ENCODE measurements at regions of chr3 and their contacts with region 1.

Region 1: DNA sequence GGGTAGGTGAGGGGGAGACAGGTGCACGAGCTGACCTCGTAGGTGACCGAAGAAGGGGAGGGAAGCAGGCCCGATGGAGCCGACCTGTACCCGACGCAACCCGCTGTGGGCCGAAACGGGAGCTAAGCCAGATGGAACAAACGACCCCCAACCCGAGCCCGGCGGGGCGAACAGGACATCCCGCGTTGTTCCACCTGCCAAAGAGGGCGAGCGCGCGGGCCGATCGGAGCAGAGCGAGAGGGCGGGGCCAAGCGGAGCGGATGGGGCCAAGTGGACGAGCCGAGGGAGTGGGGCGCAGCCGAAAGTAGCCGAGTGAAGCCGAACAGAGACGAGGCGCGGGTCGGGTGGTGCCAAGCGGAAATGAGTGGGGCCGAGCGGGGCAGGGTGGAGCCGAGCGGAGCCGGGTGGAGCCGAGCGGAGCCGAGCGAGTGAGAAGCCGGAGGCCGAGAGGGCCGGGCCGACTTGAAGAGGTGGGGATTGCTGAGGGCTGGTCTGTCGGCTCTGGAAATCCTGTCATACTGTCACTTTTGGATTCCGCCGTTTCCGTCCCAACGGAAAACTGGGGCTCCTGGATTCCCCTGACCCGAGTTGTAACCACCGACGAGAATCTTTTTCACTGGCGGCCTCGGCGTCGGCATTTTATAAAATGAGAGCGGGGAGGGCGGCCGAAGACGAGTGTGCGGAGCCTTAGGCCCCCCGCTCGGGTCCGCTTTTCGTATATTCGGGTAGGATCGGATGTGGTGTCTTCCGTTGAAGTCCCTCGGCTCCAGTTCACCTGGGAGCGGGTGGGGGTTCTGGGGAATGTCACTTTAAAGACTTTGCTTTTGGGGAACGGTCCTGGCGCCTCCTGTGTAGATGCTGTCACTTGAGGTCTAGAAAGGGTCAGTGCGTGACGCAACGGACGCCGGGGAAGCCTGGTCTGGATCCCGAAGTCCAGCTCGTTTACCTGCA is 15.6 kb upstream of the WNT7A start:
- DNase-seq: peak; percentile 98
- H3K4me3 Mint-ChIP-seq: peak overlapping the region; percentile 84
- H3K27ac Mint-ChIP-seq: peak overlapping the region; percentile 67
- H3K4me1 Mint-ChIP-seq: peaks cover 28% of the 10 kb centered on the region
- H3K27me3 Mint-ChIP-seq: no peaks in the 10 kb centered on the region

Region 2: DNA sequence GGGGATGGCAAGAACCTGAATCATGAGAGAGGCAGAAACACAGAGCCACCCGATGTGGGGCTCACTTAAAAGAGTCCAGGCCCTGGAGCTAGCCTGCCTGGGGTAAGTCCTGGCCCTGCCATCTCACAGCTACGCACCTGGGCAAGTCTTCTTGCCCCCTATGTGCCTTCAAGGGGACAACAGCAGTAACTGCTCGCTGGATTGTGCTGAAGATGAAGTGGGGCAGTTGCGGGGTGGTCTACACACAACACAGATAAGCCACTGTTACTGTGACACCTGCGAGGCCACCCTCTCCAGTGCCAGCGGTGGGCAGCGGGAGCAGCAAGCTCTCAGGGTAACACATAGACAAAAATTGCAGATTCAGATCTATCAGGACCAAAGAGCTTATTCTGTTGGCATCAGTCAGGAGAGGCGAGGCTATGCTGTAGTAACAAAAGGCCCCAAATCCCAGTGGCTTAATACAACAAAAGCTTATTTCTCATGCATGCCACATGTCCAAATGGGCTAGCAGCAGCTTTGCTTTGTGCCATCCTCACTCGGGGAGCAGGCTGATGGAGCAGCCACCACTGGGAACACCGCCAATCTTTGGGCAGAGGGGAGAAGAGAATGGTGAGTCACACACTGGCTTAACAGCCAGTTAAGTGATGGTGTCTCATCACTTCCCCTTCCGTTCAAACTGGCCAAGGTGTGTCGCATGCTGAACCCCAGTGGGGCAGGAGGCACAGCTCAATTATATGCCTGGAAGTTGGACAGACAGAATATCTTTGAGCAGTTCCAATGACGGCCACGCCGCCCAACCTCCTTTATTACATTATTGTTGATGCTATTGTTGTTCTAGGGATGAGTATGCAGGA is 93.8 kb before region 1 on chr3:
- CTCF ChIA-PET with region 1: no interaction called
- POLR2A ChIA-PET with region 1: no interaction called
- intact Hi-C with region 1: no loop called
- DNase-seq: no peak
- H3K4me3 Mint-ChIP-seq: no peak overlapping the region
- H3K27ac Mint-ChIP-seq: no peak overlapping the region
- H3K4me1 Mint-ChIP-seq: no peaks in the 10 kb centered on the region
- H3K27me3 Mint-ChIP-seq: peaks cover 1% of the 10 kb centered on the region

Region 3: GRCh38 chr3:13818919-13819318 is 76.5 kb before region 1 on chr3:
- CTCF ChIA-PET with region 1: no interaction called
- POLR2A ChIA-PET with region 1: no interaction called
- intact Hi-C with region 1: no loop called
- DNase-seq: no peak
- H3K4me3 Mint-ChIP-seq: no peak overlapping the region
- H3K27ac Mint-ChIP-seq: no peak overlapping the region
- H3K4me1 Mint-ChIP-seq: peaks cover 9% of the 10 kb centered on the region
- H3K27me3 Mint-ChIP-seq: no peaks in the 10 kb centered on the region

Region 4: DNA sequence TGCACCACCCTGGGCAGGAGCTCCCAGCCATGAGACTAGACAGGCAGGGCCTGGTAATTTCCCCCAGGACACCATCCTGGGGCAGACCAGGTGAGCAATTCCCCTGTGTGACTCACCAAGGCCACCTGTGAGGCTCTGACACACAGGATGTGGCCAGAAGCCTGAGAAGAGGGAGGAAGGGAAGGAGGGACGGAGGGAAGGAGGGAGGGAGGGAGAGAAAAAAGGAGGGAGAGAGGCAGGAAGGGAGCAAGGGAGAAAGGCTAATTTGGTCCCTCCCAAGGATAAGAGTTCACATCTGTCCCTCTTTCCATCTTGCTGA is 41.5 kb before region 1 on chr3:
- CTCF ChIA-PET with region 1: no interaction called
- POLR2A ChIA-PET with region 1: no interaction called
- intact Hi-C with region 1: no loop called
- DNase-seq: peak; percentile 40
- H3K4me3 Mint-ChIP-seq: no peak overlapping the region
- H3K27ac Mint-ChIP-seq: no peak overlapping the region
- H3K4me1 Mint-ChIP-seq: peaks cover 25% of the 10 kb centered on the region
- H3K27me3 Mint-ChIP-seq: no peaks in the 10 kb centered on the region

Region 5: GRCh38 chr3:13884851-13885703 is 10.4 kb before region 1 on chr3:
- CTCF ChIA-PET with region 1: interaction called, 30 read pairs
- POLR2A ChIA-PET with region 1: no interaction called
- intact Hi-C with region 1: no loop called
- DNase-seq: peak; percentile 77
- H3K4me3 Mint-ChIP-seq: no peak overlapping the region
- H3K27ac Mint-ChIP-seq: peak overlapping the region; percentile 25
- H3K4me1 Mint-ChIP-seq: no peaks in the 10 kb centered on the region
- H3K27me3 Mint-ChIP-seq: peaks cover 16% of the 10 kb centered on the region

Region 6: DNA sequence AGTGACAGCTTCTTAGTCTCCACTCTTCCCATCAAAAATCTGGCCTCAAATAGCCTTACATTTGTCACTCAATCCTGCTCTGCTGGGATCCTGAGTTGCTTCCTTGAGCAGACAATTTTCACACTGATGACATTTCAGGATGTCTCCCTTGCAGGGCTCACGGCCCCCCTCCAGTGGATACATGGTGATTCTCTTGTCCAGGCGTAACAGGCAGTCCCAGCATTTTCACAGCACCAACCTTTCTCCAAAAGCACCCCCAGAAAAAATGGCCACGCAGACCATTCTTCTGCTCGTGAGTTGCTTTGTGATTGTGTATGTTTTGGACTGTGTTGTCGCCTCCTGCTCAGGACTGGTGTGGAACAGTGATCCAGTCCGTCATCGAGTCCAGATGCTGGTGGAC is 31.9 kb after region 1 on chr3:
- CTCF ChIA-PET with region 1: no interaction called
- POLR2A ChIA-PET with region 1: no interaction called
- intact Hi-C with region 1: no loop called
- DNase-seq: no peak
- H3K4me3 Mint-ChIP-seq: no peak overlapping the region
- H3K27ac Mint-ChIP-seq: no peak overlapping the region
- H3K4me1 Mint-ChIP-seq: no peaks in the 10 kb centered on the region
- H3K27me3 Mint-ChIP-seq: peaks cover 7% of the 10 kb centered on the region

Region 7: DNA sequence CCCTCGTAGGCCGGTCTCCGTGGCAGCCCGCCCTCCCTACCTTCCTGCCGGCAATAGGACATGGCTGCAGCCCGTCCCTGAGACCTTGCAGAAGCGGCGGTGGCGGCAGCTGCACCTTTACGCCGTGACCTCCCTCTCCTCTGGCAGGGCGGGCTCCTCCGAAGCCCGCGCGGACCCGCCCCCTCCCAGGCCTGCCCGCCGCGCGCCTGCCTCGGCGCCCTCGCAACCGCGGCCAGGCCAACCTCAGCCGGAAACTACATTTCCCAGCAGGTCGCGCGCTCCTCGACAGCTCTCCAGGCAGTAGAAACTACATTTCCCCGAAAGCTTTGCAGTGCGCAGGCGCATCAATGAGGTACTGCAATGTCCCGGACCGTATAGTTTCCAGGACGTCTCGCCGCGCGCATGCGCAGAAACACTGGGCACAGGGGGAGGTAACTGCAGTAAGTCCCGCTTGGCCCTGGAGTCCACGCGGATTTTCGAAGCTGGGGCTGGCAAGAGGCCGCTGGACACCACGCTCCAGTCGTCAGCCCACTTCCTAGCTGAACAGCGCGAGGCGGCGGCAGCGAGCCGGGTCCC is 229.3 kb after region 1 on chr3 and contains the starts of genes CHCHD4 and TMEM43:
- CTCF ChIA-PET with region 1: interaction called, 20 read pairs
- POLR2A ChIA-PET with region 1: interaction called, 3 read pairs
- intact Hi-C with region 1: loop called (anchors 1 kb)
- DNase-seq: peak; percentile 99
- H3K4me3 Mint-ChIP-seq: peak within 1 kb of the TSS; percentile 86
- H3K27ac Mint-ChIP-seq: peak within 1 kb of the TSS; percentile 86
- H3K4me1 Mint-ChIP-seq: peaks cover 51% of the 10 kb centered on the region
- H3K27me3 Mint-ChIP-seq: no peaks in the 10 kb centered on the region
- total RNA-seq, gene CHCHD4: 17.5 to 19.2 TPM
- total RNA-seq, gene TMEM43: 31.0 to 32.4 TPM

Region 8: GRCh38 chr3:14203521-14204079 is 308.2 kb after region 1 on chr3:
- CTCF ChIA-PET with region 1: interaction called, 12 read pairs
- POLR2A ChIA-PET with region 1: no interaction called
- intact Hi-C with region 1: no loop called
- DNase-seq: peak; percentile 48
- H3K4me3 Mint-ChIP-seq: no peak overlapping the region
- H3K27ac Mint-ChIP-seq: no peak overlapping the region
- H3K4me1 Mint-ChIP-seq: peaks cover 2% of the 10 kb centered on the region
- H3K27me3 Mint-ChIP-seq: no peaks in the 10 kb centered on the region

Region 9: GRCh38 chr3:14461748-14462324 is 566.4 kb after region 1 on chr3:
- CTCF ChIA-PET with region 1: interaction called, 3 read pairs
- POLR2A ChIA-PET with region 1: no interaction called
- intact Hi-C with region 1: loop called (anchors 5 kb)
- DNase-seq: peak; percentile 58
- H3K4me3 Mint-ChIP-seq: no peak overlapping the region
- H3K27ac Mint-ChIP-seq: peak overlapping the region; percentile 65
- H3K4me1 Mint-ChIP-seq: peaks cover 35% of the 10 kb centered on the region
- H3K27me3 Mint-ChIP-seq: no peaks in the 10 kb centered on the region

Region 10: GRCh38 chr3:14651440-14652251 is 756.2 kb after region 1 on chr3 and contains the start of gene CCDC174:
- CTCF ChIA-PET with region 1: no interaction called
- POLR2A ChIA-PET with region 1: no interaction called
- intact Hi-C with region 1: loop called (anchors 2 kb)
- DNase-seq: peak; percentile 97
- H3K4me3 Mint-ChIP-seq: peak within 1 kb of the TSS; percentile 89
- H3K27ac Mint-ChIP-seq: peak within 1 kb of the TSS; percentile 98
- H3K4me1 Mint-ChIP-seq: peaks cover 35% of the 10 kb centered on the region
- H3K27me3 Mint-ChIP-seq: no peaks in the 10 kb centered on the region
- total RNA-seq, gene CCDC174: 16.6 to 18.6 TPM